GM12878 (cell line): ENCODE measurements at regions of chr2 and their contacts with region 1.

Region 1: GRCh38 chr2:197130318-197130717 is 180.3 kb downstream of the ANKRD44 start:
- DNase-seq: peak; percentile 77
- ATAC-seq: peak; percentile 87
- H3K4me3 ChIP-seq: peak overlapping the region; percentile 43; the same call in 1 of the 2 replicates
- H3K27ac ChIP-seq: peak overlapping the region; percentile 86
- H3K4me1 ChIP-seq: peaks cover 29% of the 10 kb centered on the region
- H3K27me3 ChIP-seq: no peaks in the 10 kb centered on the region
- CTCF ChIP-seq: no peak
- EP300 ChIP-seq: no peak; a peak in 1 of 4 replicates
- POLR2A ChIP-seq: no peak
- RAD21 ChIP-seq: no peak

Region 2: GRCh38 chr2:197145471-197146138 is 15.3 kb after region 1 on chr2:
- CTCF ChIA-PET with region 1: interaction called, 12 read pairs
- POLR2A ChIA-PET with region 1: interaction called, 8 read pairs
- RAD21 ChIA-PET with region 1: interaction called, 26 read pairs
- SMC1A ChIA-PET with region 1: interaction called, 43 read pairs
- in situ Hi-C with region 1: no loop called
- intact Hi-C with region 1: loop called (anchors 2 kb)
- DNase-seq: peak; percentile 89
- ATAC-seq: peak; percentile 95
- H3K4me3 ChIP-seq: no peak overlapping the region
- H3K27ac ChIP-seq: peak overlapping the region; percentile 32
- H3K4me1 ChIP-seq: peaks cover 42% of the 10 kb centered on the region
- H3K27me3 ChIP-seq: no peaks in the 10 kb centered on the region
- CTCF ChIP-seq: no peak
- EP300 ChIP-seq: peak; percentile 31 to 69; a peak in 1 of 4 replicates
- POLR2A ChIP-seq: peak; percentile 51; the same call in 1 of the 2 replicates
- RAD21 ChIP-seq: 0 out of 2 replicates have a peak, but pooled peaks have one; percentile 1

Region 3: DNA sequence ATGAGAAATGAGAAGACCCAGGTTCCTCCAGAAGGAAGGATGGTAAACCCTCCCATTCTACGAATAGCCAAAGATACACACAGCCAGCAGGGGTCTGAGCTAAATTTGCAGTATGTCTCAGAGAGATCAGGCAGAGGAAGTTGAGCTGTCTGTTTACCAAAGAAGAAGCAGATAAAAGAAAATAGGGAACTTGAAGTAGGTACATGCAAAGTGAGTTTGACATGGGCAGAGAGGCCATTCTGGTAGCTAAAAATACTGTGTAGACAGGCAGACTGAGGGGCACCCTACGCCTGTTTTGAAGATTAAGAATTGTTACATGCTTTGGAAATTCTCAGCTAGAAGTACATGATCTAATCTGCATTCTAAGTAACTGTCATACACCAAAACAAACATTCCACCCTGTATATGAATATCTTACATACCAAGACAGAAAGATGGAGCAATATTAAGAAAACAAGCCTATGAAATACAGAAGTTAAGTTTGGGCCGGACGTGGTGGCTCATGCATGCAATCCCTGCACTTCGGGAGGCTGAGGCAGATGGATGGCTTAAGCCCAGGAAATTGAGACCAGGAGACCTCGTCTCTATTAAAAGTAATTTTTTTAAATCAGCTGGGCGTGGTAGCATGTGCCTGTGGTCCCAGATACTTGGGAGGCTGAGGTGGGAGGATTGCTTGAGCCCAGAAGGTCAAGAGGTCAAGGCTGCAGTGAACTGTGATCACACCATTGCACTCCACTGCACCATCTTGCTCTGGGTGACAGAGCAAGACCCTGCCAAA is 22.3 kb after region 1 on chr2:
- CTCF ChIA-PET with region 1: interaction called, 17 read pairs
- POLR2A ChIA-PET with region 1: interaction called, 7 read pairs
- RAD21 ChIA-PET with region 1: interaction called, 18 read pairs
- SMC1A ChIA-PET with region 1: interaction called, 9 read pairs
- in situ Hi-C with region 1: no loop called
- intact Hi-C with region 1: no loop called
- DNase-seq: peak; percentile 67
- ATAC-seq: peak; percentile 93
- H3K4me3 ChIP-seq: peak overlapping the region; percentile 25; the same call in 1 of the 2 replicates
- H3K27ac ChIP-seq: peak overlapping the region; percentile 48
- H3K4me1 ChIP-seq: peaks cover 34% of the 10 kb centered on the region
- H3K27me3 ChIP-seq: no peaks in the 10 kb centered on the region
- CTCF ChIP-seq: peak in 2 of 3 experiments; percentile 31 to 39; a peak in 2 of 6 replicates
- EP300 ChIP-seq: peak in 1 of 2 experiments; percentile 44; a peak in 1 of 4 replicates
- POLR2A ChIP-seq: no peak
- RAD21 ChIP-seq: no peak; the same call in 1 of the 2 replicates

Region 4: DNA sequence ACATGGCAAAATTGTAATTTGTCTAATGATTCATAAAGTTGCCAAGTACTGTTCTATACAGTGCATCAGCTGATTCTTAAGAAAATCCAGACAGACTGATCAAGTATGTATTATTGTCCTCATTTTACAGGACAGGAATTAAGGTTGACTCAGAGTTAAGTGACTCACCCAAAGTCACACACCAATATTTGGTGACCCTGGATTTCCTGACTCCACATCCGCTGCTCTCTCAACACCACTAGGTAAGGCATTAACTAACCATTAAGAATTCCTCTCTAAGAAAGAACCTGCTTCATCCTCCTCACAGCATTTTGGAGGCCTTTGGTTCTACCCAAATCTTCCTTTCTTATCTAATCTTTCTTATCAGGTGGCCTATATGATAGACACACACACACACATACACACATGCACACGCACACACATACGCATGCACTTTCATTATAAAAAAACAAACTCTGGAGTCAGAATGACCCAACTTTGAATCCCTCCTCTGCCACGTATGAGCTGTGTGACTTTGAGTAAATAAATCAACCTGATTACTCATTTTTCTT is 29.4 kb after region 1 on chr2:
- CTCF ChIA-PET with region 1: interaction called, 17 read pairs
- POLR2A ChIA-PET with region 1: interaction called, 6 read pairs
- RAD21 ChIA-PET with region 1: interaction called, 3 read pairs
- SMC1A ChIA-PET with region 1: interaction called, 4 read pairs
- in situ Hi-C with region 1: no loop called
- intact Hi-C with region 1: no loop called
- DNase-seq: no peak
- ATAC-seq: peak; percentile 37
- H3K4me3 ChIP-seq: no peak overlapping the region
- H3K27ac ChIP-seq: no peak overlapping the region
- H3K4me1 ChIP-seq: peaks cover 23% of the 10 kb centered on the region; the same call in 1 of the 2 replicates
- H3K27me3 ChIP-seq: no peaks in the 10 kb centered on the region
- CTCF ChIP-seq: no peak
- EP300 ChIP-seq: no peak
- POLR2A ChIP-seq: no peak
- RAD21 ChIP-seq: no peak